Head of caudate nucleus (tissue), 42 donors: ENCODE measurements at regions of chr15 and their contacts with region 1.

Region 1: GRCh38 chr15:63048115-63048775 is 5.7 kb downstream of the TPM1 start:
- DNase-seq: peak; percentile 77 to 95 (median 88)

Region 2: DNA sequence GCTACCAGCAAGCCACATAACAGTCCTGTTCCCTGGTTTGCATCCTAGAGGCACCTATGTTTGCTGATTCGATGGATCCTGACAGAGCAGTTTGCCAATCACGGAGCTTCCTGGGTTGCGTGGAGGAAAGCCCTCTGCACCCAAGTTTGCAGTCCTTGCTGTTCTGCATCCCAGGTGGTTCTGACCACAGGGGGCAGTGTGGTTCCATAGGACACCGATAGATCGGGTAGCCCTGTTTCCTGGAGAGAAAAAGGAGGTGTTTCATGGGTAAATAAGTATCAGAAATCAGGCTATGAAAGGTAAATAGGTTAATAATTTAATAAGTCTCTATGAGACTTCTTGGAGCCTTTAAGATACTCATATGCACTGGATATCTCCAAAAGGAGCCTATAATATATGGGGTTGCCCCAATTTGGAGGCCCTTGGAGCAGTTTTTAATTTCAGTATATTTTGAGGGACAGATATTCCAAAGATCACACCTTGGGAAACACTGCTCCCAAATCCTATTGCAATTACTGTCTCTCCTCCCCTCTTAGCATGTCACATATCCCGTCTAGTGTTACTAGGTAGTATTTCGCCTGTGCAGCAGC is 200.2 kb before region 1 on chr15:
- intact Hi-C with region 1: loop called (anchors 5 kb)
- DNase-seq: peak; percentile 75 to 95 (median 88)